ENCODE measurements at regions of chr4 and their contacts with region 1.

Region 1: DNA sequence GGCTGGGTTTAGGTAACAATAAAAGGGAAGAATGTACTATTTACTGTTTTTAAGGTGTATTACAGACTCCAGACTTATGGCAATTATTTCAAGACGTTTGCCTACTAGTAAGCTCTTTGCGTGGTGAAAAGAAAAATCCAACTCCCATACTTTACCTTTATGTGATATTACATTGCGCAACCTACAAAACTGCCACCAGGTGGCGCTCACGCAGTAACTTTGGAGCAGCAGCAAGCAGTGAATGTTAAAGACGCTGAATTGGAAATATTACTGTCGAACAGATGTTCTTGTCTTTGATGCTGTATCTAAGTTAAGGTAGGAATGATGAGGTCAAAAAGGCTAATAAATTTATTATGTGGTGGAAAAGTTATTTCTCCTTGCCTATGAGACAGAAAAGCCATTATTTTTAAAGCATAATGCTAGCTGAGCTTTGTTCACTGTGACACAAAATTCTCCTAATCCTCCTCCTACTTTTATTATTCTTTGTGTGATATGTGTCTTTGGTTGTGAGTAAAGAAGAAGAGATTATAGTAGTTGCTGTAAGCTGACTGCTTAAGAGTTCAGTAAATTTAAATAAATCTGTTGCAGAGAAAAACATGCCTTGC is 1099.8 kb upstream of the TENM3 start:
- DNase-seq: peak; percentile 77 to 92 (median 85)
- H3K4me3 ChIP-seq: no peak overlapping the region
- H3K27ac ChIP-seq: no peak overlapping the region
- H3K4me1 ChIP-seq: no peaks in the 10 kb centered on the region
- H3K27me3 ChIP-seq: no peaks in the 10 kb centered on the region
- CTCF ChIP-seq: peak; percentile 94

Region 2: DNA sequence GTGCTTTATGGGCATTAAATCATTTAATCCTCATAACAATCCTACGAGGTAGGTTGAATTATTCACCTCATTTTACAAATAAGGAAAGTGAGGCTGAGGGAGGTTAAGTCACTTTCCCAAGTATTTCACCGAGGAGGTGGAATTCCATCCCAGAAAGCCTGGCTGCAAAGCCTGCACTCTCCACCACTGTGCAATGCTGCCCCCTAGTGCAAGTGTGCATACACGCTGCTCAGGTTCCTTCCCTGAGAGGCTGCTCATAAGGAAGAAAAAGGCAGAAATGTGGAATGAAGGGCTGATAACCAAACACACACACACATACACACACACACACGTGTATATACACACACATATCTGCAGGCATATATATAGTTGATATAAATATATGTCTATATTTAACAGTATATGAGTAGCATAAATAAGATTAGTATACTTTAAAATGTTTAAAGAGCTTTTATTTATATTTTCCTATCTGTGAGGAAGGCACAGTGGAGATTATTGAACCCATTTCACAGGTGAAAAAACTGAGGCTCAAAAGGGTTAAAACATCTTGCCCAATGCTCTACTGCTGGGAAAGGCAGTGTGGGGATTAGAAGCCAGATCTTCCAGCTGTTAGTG is 385.3 kb after region 1 on chr4:
- intact Hi-C with region 1: loop called (anchors 10 kb)
- DNase-seq: peak in 4 of 5 donors; percentile 86 to 90 (median 88)
- H3K4me3 ChIP-seq: no peak overlapping the region
- H3K27ac ChIP-seq: no peak overlapping the region
- H3K4me1 ChIP-seq: no peaks in the 10 kb centered on the region
- H3K27me3 ChIP-seq: no peaks in the 10 kb centered on the region
- CTCF ChIP-seq: peak; percentile 80

Region 3: GRCh38 chr4:182806259-182807252 is 1663.2 kb after region 1 on chr4:
- intact Hi-C with region 1: loop called (anchors 10 kb)
- DNase-seq: peak; percentile 87 to 92 (median 91)
- H3K4me3 ChIP-seq: peak overlapping the region; percentile 55 to 70 (median 62)
- H3K27ac ChIP-seq: no peak overlapping the region
- H3K4me1 ChIP-seq: peaks cover 0 to 3% (median 0%) of the 10 kb centered on the region in 3 donors
- H3K27me3 ChIP-seq: no peaks in the 10 kb centered on the region
- CTCF ChIP-seq: peak; percentile 77